Transverse colon (tissue), 4 donors: ENCODE measurements at regions of chr9 and their contacts with region 1.

Region 1: DNA sequence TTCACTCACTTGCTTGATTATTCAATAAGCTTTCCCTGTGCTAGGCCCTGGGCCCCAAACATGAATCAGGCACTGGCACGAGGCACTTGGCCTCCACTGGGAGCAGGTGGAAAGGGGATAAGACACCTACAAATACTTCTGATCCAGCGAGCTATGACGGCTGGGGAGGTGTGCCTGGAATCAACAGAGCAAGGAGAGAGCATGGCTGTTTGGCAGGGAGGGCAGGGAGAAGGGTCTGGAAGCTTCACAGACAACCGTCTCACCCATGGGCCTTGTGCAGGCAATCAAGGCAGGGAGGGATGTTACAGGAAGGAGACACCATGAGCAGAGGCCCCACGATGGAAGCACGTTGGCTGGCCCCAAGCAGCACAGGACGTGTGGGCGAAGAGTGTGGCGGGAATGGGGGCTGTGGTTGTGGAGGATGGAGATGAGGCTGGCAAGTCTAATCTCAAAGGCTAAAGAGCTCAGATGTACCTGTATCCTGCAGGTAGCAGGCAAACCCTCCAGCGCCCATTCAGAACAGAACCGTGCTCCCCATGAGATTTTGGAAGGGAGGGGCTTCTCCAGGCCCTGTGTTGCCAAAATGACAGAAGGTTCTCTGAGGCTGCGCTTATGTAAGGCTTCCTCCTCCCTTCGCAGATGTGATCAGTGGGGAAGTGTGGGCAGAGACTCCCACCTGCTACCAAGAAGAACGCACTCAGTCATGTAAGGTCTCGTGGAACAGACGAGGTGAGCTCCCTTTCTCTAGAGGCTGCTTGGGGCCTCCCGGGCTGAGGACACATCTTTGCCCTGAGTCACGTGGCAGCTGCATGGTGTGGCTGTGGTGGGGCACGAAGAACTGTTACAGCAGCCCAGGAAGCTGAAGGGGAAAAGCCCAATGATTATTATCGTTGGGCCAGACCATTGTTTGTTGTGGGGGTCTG is 189.7 kb downstream of the DAB2IP start:
- DNase-seq: no peak
- H3K4me3 ChIP-seq: no peak overlapping the region
- H3K27ac ChIP-seq: no peak overlapping the region
- H3K4me1 ChIP-seq: no peaks in the 10 kb centered on the region
- H3K27me3 ChIP-seq: no peaks in the 10 kb centered on the region
- CTCF ChIP-seq: no peak
- EP300 ChIP-seq: no peak
- POLR2A ChIP-seq: no peak

Region 2: DNA sequence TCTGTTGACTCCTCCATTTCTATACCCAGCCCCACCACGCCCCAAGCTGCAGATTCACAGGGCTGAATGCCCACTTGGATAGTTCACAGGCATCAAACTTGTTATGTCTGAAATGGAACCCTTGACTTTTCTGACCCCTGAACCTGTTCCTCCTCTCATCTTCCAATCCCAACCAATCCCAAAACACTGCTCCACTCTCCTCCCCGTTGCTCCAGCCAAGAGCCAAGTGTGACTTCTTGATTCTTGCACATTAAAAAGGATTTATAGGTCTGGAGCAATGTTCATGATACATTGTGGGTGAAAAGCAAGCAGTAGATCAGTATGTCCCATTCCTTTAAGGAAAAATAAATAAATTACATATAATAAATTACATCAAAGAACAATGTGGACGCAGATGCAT is 44.0 kb before region 1 on chr9:
- in situ Hi-C with region 1: no loop called
- intact Hi-C with region 1: loop called (anchors 1 kb)
- DNase-seq: no peak
- H3K4me3 ChIP-seq: no peak overlapping the region
- H3K27ac ChIP-seq: no peak overlapping the region
- H3K4me1 ChIP-seq: no peaks in the 10 kb centered on the region
- H3K27me3 ChIP-seq: no peaks in the 10 kb centered on the region
- CTCF ChIP-seq: no peak
- EP300 ChIP-seq: no peak
- POLR2A ChIP-seq: no peak